Posterior vena cava (tissue), 2 donors: ENCODE measurements at regions of chr5 and their contacts with region 1.

Region 1: GRCh38 chr5:27130587-27130986 is 92.2 kb upstream of the CDH9 start:
- DNase-seq: no peak

Region 2: DNA sequence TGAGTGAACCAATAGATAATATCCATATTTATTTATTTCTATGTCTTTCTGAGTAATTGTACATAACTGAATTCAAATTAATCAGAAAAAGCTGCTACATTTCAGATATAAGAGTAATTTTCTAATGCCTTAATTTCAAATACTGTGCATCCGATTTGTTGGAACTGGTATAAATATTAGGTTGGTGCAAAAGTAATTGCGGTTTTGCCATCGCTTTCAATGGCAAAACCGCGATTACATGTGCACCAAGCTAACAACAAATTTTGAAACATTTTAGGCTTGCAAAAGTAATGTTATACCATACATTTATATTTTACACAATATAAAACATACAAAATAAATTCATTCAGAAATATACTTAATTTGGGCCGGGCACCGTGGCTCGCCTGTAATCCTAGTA is 1595.6 kb before region 1 on chr5:
- intact Hi-C with region 1: loop called in 1 of 2 experiments (anchors 5 kb)
- DNase-seq: no peak

Region 3: DNA sequence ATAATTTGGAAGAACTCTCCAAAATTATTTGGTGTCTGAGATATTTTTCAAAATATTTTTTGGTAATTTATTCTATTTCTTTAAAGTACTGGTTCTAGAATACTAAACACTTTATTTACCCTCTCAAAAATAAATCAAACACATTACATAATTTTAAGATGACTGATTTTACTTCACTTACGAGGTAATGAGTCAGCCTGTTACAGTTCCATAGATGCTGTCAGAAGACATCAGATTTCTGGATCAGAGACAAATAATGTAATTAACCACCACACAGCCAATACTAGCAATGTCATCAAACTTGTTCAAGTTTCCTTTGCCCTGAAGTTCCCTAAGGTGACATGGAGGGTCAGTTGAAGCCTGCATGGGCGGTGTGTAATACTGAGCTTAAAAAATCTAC is 13.9 kb after region 1 on chr5:
- intact Hi-C with region 1: no loop called
- DNase-seq: no peak